ENCODE measurements at regions of chr22 and their contacts with region 1.

Region 1: DNA sequence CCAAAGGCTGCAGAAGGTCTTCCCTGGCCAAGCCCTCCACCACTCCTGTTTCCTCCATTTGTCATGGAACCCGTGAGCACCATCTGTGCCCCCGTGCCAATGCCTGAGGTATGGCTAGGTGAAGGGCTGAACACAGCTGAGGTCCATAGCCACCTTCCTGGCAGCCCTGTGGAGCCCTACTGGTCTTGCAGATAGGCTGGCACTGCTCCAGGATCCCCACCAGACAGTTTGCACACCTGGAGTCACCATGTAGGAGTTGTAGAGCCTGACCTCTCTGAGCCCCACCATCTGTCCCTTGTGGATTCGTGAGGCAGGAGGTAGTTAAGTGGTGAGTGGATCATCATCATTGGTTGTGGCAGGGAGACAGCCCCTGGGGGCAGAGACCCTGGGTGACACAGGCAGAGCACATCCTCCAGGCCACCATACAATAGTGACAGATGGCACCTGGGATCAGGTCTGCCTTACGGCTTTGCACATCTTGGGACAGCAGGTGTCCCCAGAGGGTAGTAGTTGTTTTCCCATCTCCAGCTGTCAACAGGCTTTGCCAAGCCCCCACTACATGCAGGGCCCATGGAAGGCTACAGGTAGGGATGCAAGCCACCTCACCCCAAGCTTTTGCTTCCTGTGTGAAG is 52.5 kb upstream of the SUSD2 start:
- DNase-seq: no peak
- H3K4me3 ChIP-seq: no peak overlapping the region
- H3K27ac ChIP-seq: no peak overlapping the region
- H3K4me1 ChIP-seq: no peaks in the 10 kb centered on the region
- H3K27me3 ChIP-seq: no peaks in the 10 kb centered on the region
- CTCF ChIP-seq: peak in 1 of 5 experiments; percentile 4
- EP300 ChIP-seq: no peak
- POLR2A ChIP-seq: no peak

Region 2: DNA sequence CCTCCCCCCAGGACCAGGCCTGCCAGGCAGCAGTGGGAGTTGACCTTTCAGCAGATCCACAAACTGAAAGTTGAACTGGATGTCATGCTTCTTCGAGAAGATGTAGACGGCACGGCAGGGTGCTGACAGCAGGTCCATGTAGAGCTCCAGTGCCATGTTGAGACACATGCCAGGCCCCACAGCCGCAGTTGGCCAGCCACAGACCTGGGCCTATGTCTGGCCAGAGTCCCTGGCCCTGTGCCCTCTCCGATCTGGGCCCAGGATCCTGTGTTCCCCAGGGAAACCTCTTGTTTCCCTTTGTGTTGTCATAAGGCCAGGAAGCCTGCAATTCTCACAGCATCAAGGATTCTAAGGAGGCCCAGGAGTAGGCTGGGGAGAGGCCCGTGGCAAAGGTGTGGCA is 123.5 kb before region 1 on chr22 and contains the start of gene GSTT4:
- in situ Hi-C with region 1: no loop called
- intact Hi-C with region 1: no loop called
- DNase-seq: no peak
- H3K4me3 ChIP-seq: no peak within 1 kb of the TSS
- H3K27ac ChIP-seq: no peak within 1 kb of the TSS
- H3K4me1 ChIP-seq: no peaks in the 10 kb centered on the region
- H3K27me3 ChIP-seq: no peaks in the 10 kb centered on the region
- CTCF ChIP-seq: no peak
- EP300 ChIP-seq: no peak
- POLR2A ChIP-seq: no peak
- total RNA-seq, gene GSTT4: not detected

Region 3: GRCh38 chr22:24379536-24379935 is 250.8 kb after region 1 on chr22:
- in situ Hi-C with region 1: no loop called
- intact Hi-C with region 1: no loop called
- DNase-seq: no peak
- H3K4me3 ChIP-seq: no peak overlapping the region
- H3K27ac ChIP-seq: no peak overlapping the region
- H3K4me1 ChIP-seq: no peaks in the 10 kb centered on the region
- H3K27me3 ChIP-seq: no peaks in the 10 kb centered on the region
- CTCF ChIP-seq: no peak
- EP300 ChIP-seq: no peak
- POLR2A ChIP-seq: no peak

Region 4: GRCh38 chr22:24402460-24403192 is 273.9 kb after region 1 on chr22:
- in situ Hi-C with region 1: no loop called
- intact Hi-C with region 1: loop called (anchors 10 kb)
- DNase-seq: peak; percentile 92
- H3K4me3 ChIP-seq: no peak overlapping the region
- H3K27ac ChIP-seq: peak overlapping the region; percentile 39 to 68 (median 58)
- H3K4me1 ChIP-seq: peaks cover 13 to 42% (median 26%) of the 10 kb centered on the region in 4 donors
- H3K27me3 ChIP-seq: no peaks in the 10 kb centered on the region
- CTCF ChIP-seq: no peak
- EP300 ChIP-seq: peak; percentile 21
- POLR2A ChIP-seq: no peak

Measured in transverse colon (tissue), 4 donors.